ENCODE measurements at regions of chr3 and their contacts with region 1.

Region 1: DNA sequence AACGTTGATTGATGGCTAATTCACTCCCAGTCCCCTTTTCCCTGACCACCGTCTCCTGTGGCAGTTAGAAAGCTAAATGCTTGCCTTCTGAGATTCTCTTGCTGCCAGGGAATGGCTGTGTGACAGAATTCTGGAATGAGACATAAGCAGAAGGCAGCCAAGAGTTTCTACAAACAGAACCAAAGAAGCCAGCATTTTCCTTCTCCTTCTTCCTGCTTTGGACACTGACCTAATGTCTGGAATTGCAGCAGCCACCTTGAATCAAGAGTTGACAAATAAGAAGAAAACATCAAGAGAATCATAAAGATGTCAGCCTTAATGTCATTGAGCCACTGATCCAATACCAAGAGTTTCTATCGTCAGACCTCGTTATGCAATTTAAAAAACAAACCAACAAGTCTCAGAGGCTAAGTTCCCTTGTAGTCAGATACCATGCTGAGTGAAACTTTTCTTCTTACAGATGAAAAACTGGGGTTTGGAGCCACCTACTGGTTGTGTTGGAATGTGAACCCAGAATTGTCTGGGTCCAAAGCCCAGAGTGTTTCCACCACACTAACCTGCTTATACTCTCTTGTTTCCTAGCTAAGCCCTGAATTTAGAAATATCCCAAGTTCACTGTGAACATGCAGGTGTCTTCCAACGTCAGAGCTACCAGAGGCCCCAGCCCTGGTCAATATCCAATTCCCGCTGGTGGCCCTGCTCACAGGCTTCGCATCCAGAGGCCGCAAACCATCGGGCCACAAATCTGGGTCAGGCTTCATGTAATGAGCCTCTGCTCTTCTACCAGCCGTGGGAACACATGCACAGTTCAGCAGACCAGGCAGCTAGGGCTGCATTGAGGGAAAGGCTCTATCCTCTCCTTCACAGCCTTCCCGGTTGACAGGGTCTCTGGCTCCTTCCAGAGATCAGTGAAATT is 42.5 kb downstream of the MCF2L2 start:
- DNase-seq: peak; percentile 79
- H3K4me3 Mint-ChIP-seq: no peak overlapping the region
- H3K27ac Mint-ChIP-seq: no peak overlapping the region
- H3K4me1 Mint-ChIP-seq: peaks cover 9% of the 10 kb centered on the region
- H3K27me3 Mint-ChIP-seq: no peaks in the 10 kb centered on the region

Region 2: DNA sequence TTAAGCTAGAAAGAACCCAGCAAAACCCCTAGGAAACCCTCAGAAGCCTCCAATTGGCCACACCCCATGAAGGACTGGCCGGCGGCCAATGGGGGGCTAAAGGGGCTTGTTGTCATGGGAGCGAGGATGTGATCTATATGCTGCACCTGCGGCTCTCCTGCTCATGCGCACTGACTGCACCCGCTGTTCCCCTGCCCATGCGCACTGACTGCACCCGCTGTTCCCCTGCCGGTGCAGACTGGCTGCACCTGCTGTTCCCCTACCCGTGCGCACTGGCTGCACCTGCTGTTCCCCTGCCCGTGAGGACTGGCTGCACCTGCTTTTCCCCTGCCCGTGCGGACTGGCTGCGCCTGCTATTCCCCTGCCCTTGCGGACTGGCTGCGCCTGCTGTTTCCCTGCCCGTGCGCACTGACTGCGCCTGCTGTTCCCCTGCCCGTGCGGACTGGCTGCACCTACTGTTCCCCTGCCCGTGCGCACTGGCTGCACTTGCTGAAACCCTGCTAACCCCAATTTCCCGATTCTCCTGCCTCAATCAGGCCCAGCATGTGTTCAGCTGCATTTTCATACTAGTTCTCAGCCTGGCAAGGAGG is 269.8 kb before region 1 on chr3:
- CTCF ChIA-PET with region 1: interaction called, 89 read pairs
- intact Hi-C with region 1: no loop called
- DNase-seq: peak; percentile 67
- H3K4me3 Mint-ChIP-seq: peak overlapping the region; percentile 68
- H3K27ac Mint-ChIP-seq: no peak overlapping the region
- H3K4me1 Mint-ChIP-seq: peaks cover 5% of the 10 kb centered on the region
- H3K27me3 Mint-ChIP-seq: peaks cover 23% of the 10 kb centered on the region

Region 3: GRCh38 chr3:183178629-183179549 is 207.1 kb before region 1 on chr3:
- CTCF ChIA-PET with region 1: interaction called, 318 read pairs
- intact Hi-C with region 1: loop called (anchors 1 kb)
- DNase-seq: peak; percentile 84
- H3K4me3 Mint-ChIP-seq: peak overlapping the region; percentile 76
- H3K27ac Mint-ChIP-seq: no peak overlapping the region
- H3K4me1 Mint-ChIP-seq: peaks cover 11% of the 10 kb centered on the region
- H3K27me3 Mint-ChIP-seq: peaks cover 30% of the 10 kb centered on the region

Region 4: DNA sequence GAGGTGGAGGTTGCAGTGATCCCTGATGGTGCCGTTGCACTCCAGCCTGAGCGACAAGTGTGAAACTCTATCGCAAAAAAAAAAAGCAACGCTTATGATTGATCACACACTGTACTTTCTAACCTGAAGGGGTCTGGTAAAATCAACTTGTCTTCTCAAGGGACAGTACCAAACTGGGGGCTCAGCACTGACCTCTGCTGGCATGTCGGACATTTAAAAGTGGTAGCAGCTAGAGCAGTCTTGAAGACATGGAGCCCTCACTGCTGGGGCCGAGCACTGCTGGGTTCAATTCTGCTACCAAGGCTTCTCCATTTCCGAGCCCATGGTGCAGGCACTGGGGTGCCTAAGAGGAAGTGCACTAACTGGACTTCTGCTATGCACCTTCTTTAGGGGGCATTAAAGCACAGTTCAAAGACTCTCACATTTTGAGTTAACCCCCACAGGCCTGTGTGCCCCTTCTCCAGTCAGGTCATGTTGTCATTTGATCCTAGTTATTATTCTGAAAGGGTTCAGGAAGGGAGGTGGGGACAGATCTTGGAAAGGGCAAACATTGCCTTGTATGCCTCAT is 197.0 kb before region 1 on chr3:
- CTCF ChIA-PET with region 1: interaction called, 318 read pairs
- intact Hi-C with region 1: loop called (anchors 1 kb)
- DNase-seq: peak; percentile 47
- H3K4me3 Mint-ChIP-seq: no peak overlapping the region
- H3K27ac Mint-ChIP-seq: no peak overlapping the region
- H3K4me1 Mint-ChIP-seq: peaks cover 27% of the 10 kb centered on the region
- H3K27me3 Mint-ChIP-seq: no peaks in the 10 kb centered on the region

Region 5: GRCh38 chr3:183766745-183767606 is 381.0 kb after region 1 on chr3:
- CTCF ChIA-PET with region 1: interaction called, 3 read pairs
- intact Hi-C with region 1: loop called (anchors 2 kb)
- DNase-seq: peak; percentile 89
- H3K4me3 Mint-ChIP-seq: no peak overlapping the region
- H3K27ac Mint-ChIP-seq: no peak overlapping the region
- H3K4me1 Mint-ChIP-seq: peaks cover 11% of the 10 kb centered on the region
- H3K27me3 Mint-ChIP-seq: no peaks in the 10 kb centered on the region

Measured in activated naive CD4-positive, alpha-beta T cell treated with anti-CD3 and anti-CD28 coated beads for 36 hours (primary cell).